Sigmoid colon (tissue), 7 donors: ENCODE measurements at regions of chr6 and their contacts with region 1.

Region 1: DNA sequence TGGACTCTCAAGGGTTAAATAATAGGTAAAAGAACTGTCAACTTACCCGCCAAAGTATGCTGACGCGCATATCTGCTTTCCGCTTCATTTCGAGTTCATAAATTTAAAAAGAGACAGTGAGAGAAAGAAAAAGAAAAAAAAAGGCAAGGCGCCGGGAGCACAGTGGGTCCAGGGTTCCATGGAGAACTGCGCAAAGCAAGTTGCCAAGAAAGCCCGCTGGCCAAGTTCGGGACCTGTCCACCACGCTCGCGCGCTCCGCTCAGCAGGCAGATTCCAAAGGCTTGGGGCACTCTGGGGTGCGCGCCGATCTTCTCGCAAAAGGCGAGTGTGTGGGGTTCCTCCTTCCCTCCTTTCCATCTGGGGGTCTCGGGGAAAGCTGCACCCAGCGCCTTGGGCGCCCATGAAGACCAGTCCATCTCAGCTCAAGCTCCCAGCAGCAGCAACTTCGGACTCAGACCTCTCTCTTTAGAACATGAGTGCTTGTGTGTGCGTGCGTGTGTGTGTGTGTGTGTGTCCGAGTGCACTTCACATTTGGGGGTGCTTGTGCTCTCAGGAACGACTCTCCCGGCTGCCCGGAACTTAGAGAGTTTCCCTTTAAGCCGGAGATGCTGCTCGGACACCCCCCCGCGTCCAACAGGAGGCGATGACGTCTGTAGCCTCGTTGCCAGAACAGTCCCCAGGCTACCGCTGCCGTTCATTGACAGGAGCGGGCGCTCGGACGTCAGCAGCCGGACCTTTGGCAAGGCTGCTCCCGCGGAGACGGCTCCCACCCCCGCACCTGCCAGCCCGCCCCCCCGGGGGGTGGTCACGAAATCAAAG is 180.0 kb downstream of the TBXT start:
- DNase-seq: peak; percentile 98
- H3K4me3 ChIP-seq: peak overlapping the region; percentile 50 to 66 (median 55)
- H3K27ac ChIP-seq: peak overlapping the region; percentile 24 to 87 (median 78)
- H3K4me1 ChIP-seq: peaks cover 0 to 28% (median 23%) of the 10 kb centered on the region in 4 donors
- H3K27me3 ChIP-seq: peaks cover 0 to 19% (median 0%) of the 10 kb centered on the region in 3 donors
- CTCF ChIP-seq: no peak
- EP300 ChIP-seq: peak; percentile 95 to 99 (median 98)
- POLR2A ChIP-seq: no peak

Region 2: GRCh38 chr6:165884813-165885765 is 102.6 kb before region 1 on chr6:
- intact Hi-C with region 1: loop called (anchors 5 kb)
- DNase-seq: peak; percentile 92
- H3K4me3 ChIP-seq: no peak overlapping the region
- H3K27ac ChIP-seq: peak overlapping the region in 1 of 4 donors; percentile 51
- H3K4me1 ChIP-seq: peaks cover 0 to 24% (median 9%) of the 10 kb centered on the region in 4 donors
- H3K27me3 ChIP-seq: no peaks in the 10 kb centered on the region
- CTCF ChIP-seq: peak; percentile 79 to 95 (median 90)
- EP300 ChIP-seq: no peak
- POLR2A ChIP-seq: no peak

Region 3: DNA sequence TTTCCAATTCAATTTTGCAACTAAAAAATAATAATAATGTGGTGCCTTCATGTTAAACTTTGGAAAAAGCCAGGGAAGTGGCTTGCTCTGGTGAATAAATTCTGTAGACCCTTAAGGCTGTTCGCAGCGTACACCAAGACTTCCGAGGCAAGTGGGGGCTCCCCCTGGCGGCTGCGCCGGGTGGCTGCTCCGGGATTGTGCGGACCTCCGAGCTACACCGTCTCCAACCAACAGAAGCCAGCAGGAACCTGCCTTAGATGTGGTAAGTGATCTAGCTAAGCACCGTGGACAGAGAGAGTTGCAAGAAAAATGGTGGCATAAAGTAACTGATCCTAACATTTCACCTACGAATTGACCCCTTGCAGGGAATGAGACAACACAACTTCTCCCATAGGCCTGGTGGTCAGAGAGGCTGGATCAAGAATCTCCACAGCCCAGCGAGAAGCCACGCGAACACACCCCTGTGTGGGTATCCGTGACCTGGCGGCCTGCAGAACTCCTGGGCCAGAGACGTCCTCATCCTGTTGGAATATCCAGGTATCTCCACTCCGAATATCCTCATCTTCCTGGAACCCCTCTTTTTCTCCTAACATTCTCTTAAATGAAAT is 110.3 kb after region 1 on chr6:
- intact Hi-C with region 1: loop called (anchors 2 kb)
- DNase-seq: peak; percentile 88
- H3K4me3 ChIP-seq: peak overlapping the region in 3 of 4 donors; percentile 39 to 47 (median 45)
- H3K27ac ChIP-seq: peak overlapping the region in 3 of 4 donors; percentile 35 to 65 (median 39)
- H3K4me1 ChIP-seq: no peaks in the 10 kb centered on the region
- H3K27me3 ChIP-seq: no peaks in the 10 kb centered on the region
- CTCF ChIP-seq: peak; percentile 76 to 92 (median 81)
- EP300 ChIP-seq: no peak
- POLR2A ChIP-seq: no peak